Dendritic cell treated with granulocyte-macrophage colony-stimulating factor and Interleukin-4, amounts not matched to agents 40 ng/mL and 50 ng/mL, for 4 days (primary cell): ENCODE measurements at regions of chr3 and their contacts with region 1.

Region 1: DNA sequence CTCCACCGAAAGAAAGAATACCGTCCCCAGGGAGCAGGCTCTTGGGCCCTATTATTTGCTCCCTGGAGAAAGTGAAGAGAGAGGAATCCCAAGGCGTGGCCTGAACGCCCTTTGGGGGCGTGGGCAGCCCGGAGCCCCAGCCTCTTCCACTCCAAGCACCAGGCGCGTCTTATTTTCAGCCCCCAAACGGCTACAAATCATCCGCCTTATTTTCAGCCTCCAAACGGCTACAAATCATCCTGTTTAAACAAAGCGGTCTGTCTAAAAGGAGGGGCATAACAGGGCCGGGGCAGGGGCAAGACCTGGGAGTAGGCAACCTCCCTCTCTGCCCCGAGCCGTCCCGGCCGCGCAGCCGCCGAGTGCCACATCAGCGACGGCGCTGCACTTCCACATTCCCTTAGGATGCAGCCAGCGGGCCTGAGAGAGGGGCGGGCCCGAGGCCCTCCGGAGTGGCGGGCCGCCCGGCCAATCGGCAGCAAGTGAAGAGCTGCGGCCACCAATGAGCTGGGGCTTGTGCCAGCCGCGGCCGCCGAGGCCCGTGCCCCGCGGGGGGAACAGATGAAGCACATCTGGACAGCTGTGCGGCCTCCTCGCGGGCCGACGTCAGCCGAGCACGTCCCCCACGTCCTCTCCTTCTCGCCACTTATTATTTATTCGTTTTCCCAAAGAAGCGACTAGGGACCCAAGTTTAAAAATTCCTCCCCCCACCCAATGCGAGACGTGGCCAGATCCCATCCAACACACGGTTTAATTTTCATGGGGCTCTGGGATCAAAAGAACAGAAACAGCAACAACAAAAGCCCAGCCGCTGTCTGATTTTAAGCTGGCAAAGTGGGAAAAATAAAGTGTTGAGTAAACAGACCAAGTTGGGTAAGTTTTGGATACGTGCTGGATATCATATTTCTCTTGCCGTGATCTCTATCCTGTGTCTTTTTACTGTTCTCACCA is at the start of gene TMEM45A:
- H3K4me3 Mint-ChIP-seq: peak within 1 kb of the TSS; percentile 76
- H3K27ac Mint-ChIP-seq: peak within 1 kb of the TSS; percentile 61
- H3K4me1 Mint-ChIP-seq: peaks cover 8% of the 10 kb centered on the region
- H3K27me3 Mint-ChIP-seq: peaks cover 20% of the 10 kb centered on the region

Region 2: DNA sequence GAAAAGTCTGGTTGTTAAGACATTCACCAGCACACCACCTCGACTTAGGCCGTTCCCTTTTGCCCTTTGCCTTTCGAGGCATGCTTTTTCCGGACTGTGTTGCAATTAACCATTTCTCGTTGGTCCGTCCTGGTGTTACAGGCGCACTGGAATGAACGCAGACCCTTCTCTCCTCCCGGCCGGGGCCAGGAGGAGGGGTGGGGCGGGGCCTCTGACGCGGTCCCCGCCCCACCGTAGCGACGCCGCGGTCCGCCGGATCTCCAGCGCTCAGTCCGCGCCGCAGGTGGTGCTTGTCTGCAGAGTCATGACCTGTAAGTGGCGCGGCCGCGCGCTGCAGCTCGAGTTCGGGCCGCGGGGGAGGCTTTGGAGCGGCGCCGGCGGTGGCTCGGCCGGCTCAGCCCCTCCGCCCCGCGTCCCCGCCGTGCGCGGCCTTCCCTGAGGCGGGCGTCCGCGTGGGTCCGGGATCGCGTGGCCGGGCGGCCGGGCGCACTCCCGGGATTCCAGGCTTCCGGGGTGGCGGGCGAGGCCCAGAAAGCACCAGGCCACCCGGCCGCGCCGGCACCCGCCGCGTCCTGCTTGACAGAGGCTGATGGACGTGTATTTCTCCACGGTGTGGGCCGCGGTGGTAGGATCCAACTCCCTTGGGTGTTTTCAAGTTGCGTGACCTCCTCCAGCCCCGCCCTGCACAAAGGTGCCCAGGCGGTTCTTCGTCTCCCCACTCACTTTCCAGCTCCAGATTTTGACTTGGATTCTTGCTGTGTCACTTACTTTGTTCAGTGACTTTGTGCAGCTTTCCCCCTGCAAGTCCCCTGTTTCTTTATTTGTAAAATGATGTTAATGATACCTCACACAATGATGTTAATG is 157.6 kb before region 1 on chr3 and contains the start of gene NIT2:
- intact Hi-C with region 1: loop called (anchors 10 kb)
- H3K4me3 Mint-ChIP-seq: peak within 1 kb of the TSS; percentile 87
- H3K27ac Mint-ChIP-seq: peak within 1 kb of the TSS; percentile 88
- H3K4me1 Mint-ChIP-seq: peaks cover 25% of the 10 kb centered on the region
- H3K27me3 Mint-ChIP-seq: no peaks in the 10 kb centered on the region

Region 3: GRCh38 chr3:100708967-100709841 is 216.9 kb after region 1 on chr3 and contains the start of gene TFG:
- intact Hi-C with region 1: loop called (anchors 5 kb)
- H3K4me3 Mint-ChIP-seq: peak within 1 kb of the TSS; percentile 92
- H3K27ac Mint-ChIP-seq: peak within 1 kb of the TSS; percentile 96
- H3K4me1 Mint-ChIP-seq: peaks cover 38% of the 10 kb centered on the region
- H3K27me3 Mint-ChIP-seq: peaks cover 10% of the 10 kb centered on the region

Region 4: GRCh38 chr3:101036213-101036618 is 543.9 kb after region 1 on chr3:
- intact Hi-C with region 1: no loop called
- H3K4me3 Mint-ChIP-seq: no peak overlapping the region
- H3K27ac Mint-ChIP-seq: no peak overlapping the region
- H3K4me1 Mint-ChIP-seq: no peaks in the 10 kb centered on the region
- H3K27me3 Mint-ChIP-seq: no peaks in the 10 kb centered on the region